ENCODE measurements at regions of chr15 and their contacts with region 1.

Region 1: GRCh38 chr15:74453925-74454763 is 6.8 kb downstream of the UBL7 start:
- DNase-seq: no peak
- H3K4me3 Mint-ChIP-seq: no peak overlapping the region
- H3K27ac Mint-ChIP-seq: peak overlapping the region; percentile 6
- H3K4me1 Mint-ChIP-seq: peaks cover 22% of the 10 kb centered on the region
- H3K27me3 Mint-ChIP-seq: no peaks in the 10 kb centered on the region

Region 2: GRCh38 chr15:74322181-74323076 is 131.7 kb before region 1 on chr15:
- intact Hi-C with region 1: no loop called
- DNase-seq: peak; percentile 85
- H3K4me3 Mint-ChIP-seq: no peak overlapping the region
- H3K27ac Mint-ChIP-seq: no peak overlapping the region
- H3K4me1 Mint-ChIP-seq: no peaks in the 10 kb centered on the region
- H3K27me3 Mint-ChIP-seq: peaks cover 9% of the 10 kb centered on the region

Region 3: GRCh38 chr15:74489518-74490338 is 35.6 kb after region 1 on chr15:
- intact Hi-C with region 1: loop called (anchors 5 kb)
- DNase-seq: peak; percentile 91
- H3K4me3 Mint-ChIP-seq: peak overlapping the region; percentile 6
- H3K27ac Mint-ChIP-seq: no peak overlapping the region
- H3K4me1 Mint-ChIP-seq: peaks cover 16% of the 10 kb centered on the region
- H3K27me3 Mint-ChIP-seq: no peaks in the 10 kb centered on the region